ENCODE measurements at regions of chr12 and their contacts with region 1.

Region 1: DNA sequence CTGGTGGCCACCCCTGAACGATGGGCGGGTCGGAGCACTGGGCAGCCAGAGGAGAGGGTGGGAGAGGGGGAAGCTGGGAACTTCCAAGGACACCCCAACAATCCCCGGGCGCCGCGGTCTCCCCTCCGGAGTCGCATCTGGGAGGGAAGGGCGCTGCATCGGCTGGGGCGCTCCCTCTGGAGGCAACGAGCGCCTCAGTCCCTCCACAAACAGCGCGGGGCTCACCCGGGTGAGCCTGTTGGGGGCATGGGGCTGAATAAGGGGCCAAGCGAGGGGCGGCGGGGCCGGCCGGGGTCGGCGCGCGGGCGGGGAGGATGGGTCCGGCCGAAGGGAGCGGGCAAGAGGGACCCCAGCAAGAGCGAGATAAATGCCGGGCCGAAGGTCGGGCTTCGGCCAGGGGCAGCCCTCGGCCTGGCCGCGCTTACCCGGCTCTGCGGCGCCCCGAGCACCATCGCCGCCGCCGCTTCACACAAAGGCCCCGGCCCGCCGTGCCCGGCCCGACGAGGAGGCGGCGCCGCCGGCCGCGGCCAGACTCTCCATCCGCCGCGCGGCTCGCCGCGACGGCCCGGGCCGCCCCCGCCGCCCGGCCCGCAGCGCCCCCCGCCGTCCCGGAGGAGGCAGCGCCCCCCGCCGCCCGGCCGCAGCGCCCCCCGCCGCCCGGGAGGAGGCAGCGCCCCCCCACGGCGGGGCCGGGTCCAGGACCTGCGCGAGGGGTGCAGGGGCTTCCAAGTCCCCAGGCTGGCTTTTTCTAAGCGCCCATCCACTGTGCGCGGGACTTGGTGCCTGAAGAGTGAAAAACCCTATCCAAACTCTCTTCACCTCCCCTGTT is at the start of gene ZBTB39:
- DNase-seq: peak; percentile 49 to 84 (median 67)
- ATAC-seq: peak; percentile 88
- H3K4me3 ChIP-seq: peak within 1 kb of the TSS; percentile 66 to 70
- H3K4me3 Mint-ChIP-seq: peak within 1 kb of the TSS; percentile 97
- H3K27ac ChIP-seq: peak within 1 kb of the TSS; percentile 39 to 64
- H3K27ac Mint-ChIP-seq: peak within 1 kb of the TSS; percentile 92
- H3K4me1 ChIP-seq: peaks cover 36% of the 10 kb centered on the region
- H3K4me1 Mint-ChIP-seq: peaks cover 52% of the 10 kb centered on the region
- H3K27me3 ChIP-seq: no peaks in the 10 kb centered on the region
- H3K27me3 Mint-ChIP-seq: no peaks in the 10 kb centered on the region
- CTCF ChIP-seq: peak; percentile 43
- total RNA-seq, gene ZBTB39: 9.9 to 11.3 TPM

Region 2: DNA sequence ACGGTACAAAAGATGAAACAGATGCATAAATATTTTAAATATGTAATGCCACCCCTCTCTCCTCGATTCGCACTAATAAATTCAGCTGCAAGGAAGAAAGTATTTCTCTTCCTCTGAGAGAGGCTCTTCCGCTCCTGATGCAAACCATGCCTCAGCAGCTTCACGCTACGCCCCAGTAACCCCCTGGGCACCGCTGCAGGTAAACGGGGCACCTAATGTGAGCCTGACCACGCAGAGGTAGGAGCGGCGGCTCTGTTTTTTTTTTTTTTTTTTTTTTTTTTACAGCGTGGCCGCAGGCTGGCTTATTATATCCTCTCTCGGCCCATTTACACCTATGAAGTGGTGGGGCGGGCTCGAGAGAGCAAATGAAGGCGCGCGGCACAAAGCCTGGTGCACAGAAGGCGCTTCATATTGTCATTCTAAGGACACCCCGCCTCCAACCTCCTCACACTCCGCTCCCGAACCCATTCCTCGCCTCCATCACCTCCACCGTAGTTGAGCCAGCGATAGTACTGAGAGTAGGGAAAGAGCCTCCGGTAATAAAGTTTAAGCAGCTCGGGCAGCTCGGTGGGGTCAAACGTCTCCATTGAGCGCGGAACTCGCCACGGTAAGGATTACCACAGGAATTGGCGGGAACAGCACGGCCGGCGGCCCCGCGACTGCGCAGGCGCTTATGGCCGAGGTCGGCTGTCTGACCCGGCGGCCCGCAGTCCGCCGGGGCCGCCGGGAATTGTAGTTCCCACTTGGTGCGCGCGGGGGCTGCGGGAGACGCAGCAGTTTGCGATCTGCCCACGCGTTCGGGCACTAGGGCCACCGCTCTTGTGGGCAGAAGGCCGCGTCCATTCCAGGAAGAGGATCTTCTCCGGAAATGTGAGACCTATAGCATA is 254.2 kb before region 1 on chr12 and contains the start of gene PRIM1:
- CTCF ChIA-PET with region 1: interaction called, 21 read pairs
- POLR2A ChIA-PET with region 1: no interaction called
- intact Hi-C with region 1: loop called (anchors 1 kb)
- DNase-seq: peak; percentile 58 to 89 (median 81)
- ATAC-seq: peak; percentile 81
- H3K4me3 ChIP-seq: peak within 1 kb of the TSS; percentile 91 to 99
- H3K4me3 Mint-ChIP-seq: peak within 1 kb of the TSS; percentile 97
- H3K27ac ChIP-seq: peak within 1 kb of the TSS; percentile 71 to 76
- H3K27ac Mint-ChIP-seq: peak within 1 kb of the TSS; percentile 86
- H3K4me1 ChIP-seq: peaks cover 11% of the 10 kb centered on the region
- H3K4me1 Mint-ChIP-seq: peaks cover 22% of the 10 kb centered on the region
- H3K27me3 ChIP-seq: no peaks in the 10 kb centered on the region
- H3K27me3 Mint-ChIP-seq: no peaks in the 10 kb centered on the region
- CTCF ChIP-seq: peak; percentile 23
- total RNA-seq, gene PRIM1: 5.0 to 5.8 TPM

Region 3: DNA sequence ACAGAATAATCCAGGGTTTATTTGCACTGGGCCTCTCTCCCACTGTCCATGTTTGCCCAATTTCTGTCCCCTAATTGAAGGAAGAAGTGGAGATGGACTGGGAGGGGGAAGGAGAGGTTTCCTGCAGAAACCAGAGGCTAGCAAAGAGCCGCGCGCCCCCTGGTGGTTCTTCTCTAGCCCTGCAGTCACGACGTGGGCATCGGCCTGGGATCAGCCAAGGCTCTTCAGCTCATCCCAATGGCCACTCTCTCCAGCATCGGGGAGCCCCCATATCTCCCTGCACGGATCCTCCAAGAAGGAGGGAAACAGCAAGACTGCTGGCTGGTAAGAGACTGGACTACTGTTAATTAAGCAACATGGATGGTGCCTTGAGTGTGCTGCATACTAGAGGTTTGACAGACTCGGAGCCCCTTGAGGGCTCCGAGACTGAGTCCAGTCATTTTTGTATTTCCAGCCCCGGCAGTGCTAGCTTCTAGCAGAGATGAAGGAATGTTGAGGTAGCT is 18.6 kb before region 1 on chr12:
- CTCF ChIA-PET with region 1: interaction called, 19 read pairs
- POLR2A ChIA-PET with region 1: no interaction called
- intact Hi-C with region 1: no loop called
- DNase-seq: peak; percentile 41 to 83 (median 75)
- ATAC-seq: peak; percentile 92
- H3K4me3 ChIP-seq: no peak overlapping the region
- H3K4me3 Mint-ChIP-seq: peak overlapping the region; percentile 49
- H3K27ac ChIP-seq: no peak overlapping the region
- H3K27ac Mint-ChIP-seq: no peak overlapping the region
- H3K4me1 ChIP-seq: peaks cover 4% of the 10 kb centered on the region
- H3K4me1 Mint-ChIP-seq: peaks cover 11% of the 10 kb centered on the region
- H3K27me3 ChIP-seq: no peaks in the 10 kb centered on the region
- H3K27me3 Mint-ChIP-seq: no peaks in the 10 kb centered on the region
- CTCF ChIP-seq: peak; percentile 66

Region 4: GRCh38 chr12:57058454-57058853 is 52.3 kb after region 1 on chr12:
- CTCF ChIA-PET with region 1: interaction called, 31 read pairs
- POLR2A ChIA-PET with region 1: interaction called, 7 read pairs
- intact Hi-C with region 1: loop called in 1 of 2 experiments (anchors 1 kb)
- DNase-seq: no peak
- ATAC-seq: no peak
- H3K4me3 ChIP-seq: no peak overlapping the region
- H3K4me3 Mint-ChIP-seq: no peak overlapping the region
- H3K27ac ChIP-seq: no peak overlapping the region
- H3K27ac Mint-ChIP-seq: no peak overlapping the region
- H3K4me1 ChIP-seq: peaks cover 7% of the 10 kb centered on the region
- H3K4me1 Mint-ChIP-seq: peaks cover 9% of the 10 kb centered on the region
- H3K27me3 ChIP-seq: no peaks in the 10 kb centered on the region
- H3K27me3 Mint-ChIP-seq: no peaks in the 10 kb centered on the region
- CTCF ChIP-seq: no peak

Region 5: DNA sequence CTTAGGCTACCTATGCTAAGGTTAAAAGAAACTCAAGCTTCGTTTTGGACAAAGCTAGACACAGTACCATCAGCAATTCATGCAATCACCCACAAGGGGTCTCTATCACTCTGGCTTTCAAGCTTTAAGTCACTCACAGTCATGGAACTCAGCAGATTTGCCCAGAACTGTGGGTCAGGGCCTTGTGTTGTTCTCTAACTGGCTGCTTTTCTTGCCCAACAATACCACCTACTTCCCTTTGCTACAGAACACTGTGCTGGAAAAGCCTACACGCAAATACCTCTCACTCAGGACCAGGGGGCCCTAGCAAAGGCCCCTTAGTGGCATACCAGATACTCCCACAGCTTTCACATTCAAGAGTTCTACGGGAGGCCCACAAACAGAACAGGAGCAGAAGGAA is 63.3 kb after region 1 on chr12:
- CTCF ChIA-PET with region 1: interaction called, 18 read pairs
- POLR2A ChIA-PET with region 1: no interaction called
- intact Hi-C with region 1: loop called in 1 of 2 experiments (anchors 1 kb)
- DNase-seq: peak in 8 of 9 experiments; percentile 28 to 88 (median 61)
- ATAC-seq: peak; percentile 99
- H3K4me3 ChIP-seq: no peak overlapping the region
- H3K4me3 Mint-ChIP-seq: peak overlapping the region; percentile 16
- H3K27ac ChIP-seq: peak overlapping the region in 1 of 2 experiments; percentile 28
- H3K27ac Mint-ChIP-seq: peak overlapping the region; percentile 70
- H3K4me1 ChIP-seq: peaks cover 18% of the 10 kb centered on the region
- H3K4me1 Mint-ChIP-seq: peaks cover 23% of the 10 kb centered on the region
- H3K27me3 ChIP-seq: no peaks in the 10 kb centered on the region
- H3K27me3 Mint-ChIP-seq: no peaks in the 10 kb centered on the region
- CTCF ChIP-seq: peak; percentile 86

Region 6: DNA sequence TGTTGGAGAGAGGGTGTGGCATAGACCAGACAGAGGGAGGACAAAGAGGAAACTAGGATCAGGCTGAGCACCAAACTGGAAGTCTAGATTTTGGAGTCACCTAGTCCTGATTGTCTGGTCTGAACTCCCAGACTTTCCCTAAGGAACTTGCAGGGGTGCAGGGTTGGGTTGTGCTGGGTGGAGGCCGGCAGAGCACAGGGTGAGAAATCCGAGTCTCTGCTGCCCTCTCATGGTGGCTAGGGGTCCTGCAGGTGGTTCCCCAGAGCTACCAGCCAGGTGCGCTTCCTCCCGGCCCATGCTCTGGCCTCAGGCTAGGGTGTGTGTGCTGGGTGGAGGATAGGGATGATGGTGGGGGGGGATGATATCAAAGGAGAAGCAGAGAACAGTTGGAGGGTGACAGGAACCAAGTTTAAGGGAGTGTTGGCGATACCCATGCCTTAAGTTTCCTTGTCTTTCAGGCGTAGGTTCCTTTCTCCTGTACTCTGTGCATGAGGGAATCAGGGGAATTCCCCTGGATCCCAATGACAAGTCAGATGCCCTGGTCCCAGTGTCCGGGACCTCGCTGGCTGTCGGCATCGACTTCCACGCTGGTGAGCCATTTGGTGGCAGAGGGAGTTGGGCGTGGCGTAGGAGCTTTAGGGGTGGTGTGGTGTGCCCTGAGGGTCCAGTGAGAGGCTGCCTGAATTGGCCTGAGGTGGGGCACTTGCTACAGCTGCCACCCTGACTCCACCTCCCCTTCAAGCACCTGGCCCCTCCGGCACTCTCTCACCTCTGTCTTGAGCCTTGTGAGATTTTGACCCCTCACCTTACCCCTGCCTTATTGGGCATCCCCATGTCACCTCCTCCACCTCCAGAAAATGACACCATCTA is 177.0 kb after region 1 on chr12:
- CTCF ChIA-PET with region 1: interaction called, 3 read pairs
- POLR2A ChIA-PET with region 1: no interaction called
- intact Hi-C with region 1: loop called (anchors 1 to 2 kb)
- DNase-seq: peak; percentile 63 to 88 (median 82)
- ATAC-seq: peak; percentile 100
- H3K4me3 ChIP-seq: no peak overlapping the region
- H3K4me3 Mint-ChIP-seq: no peak overlapping the region
- H3K27ac ChIP-seq: no peak overlapping the region
- H3K27ac Mint-ChIP-seq: no peak overlapping the region
- H3K4me1 ChIP-seq: peaks cover 5% of the 10 kb centered on the region
- H3K4me1 Mint-ChIP-seq: peaks cover 2% of the 10 kb centered on the region
- H3K27me3 ChIP-seq: no peaks in the 10 kb centered on the region
- H3K27me3 Mint-ChIP-seq: no peaks in the 10 kb centered on the region
- CTCF ChIP-seq: peak; percentile 83

Measured in CD8-positive, alpha-beta T cell (primary cell).